Cardiac septum (tissue), 1 donor: ENCODE measurements at regions of chr2 and their contacts with region 1.

Region 1: GRCh38 chr2:200713003-200713703 is 98.6 kb upstream of the BZW1 start:
- DNase-seq: peak; percentile 93

Region 2: DNA sequence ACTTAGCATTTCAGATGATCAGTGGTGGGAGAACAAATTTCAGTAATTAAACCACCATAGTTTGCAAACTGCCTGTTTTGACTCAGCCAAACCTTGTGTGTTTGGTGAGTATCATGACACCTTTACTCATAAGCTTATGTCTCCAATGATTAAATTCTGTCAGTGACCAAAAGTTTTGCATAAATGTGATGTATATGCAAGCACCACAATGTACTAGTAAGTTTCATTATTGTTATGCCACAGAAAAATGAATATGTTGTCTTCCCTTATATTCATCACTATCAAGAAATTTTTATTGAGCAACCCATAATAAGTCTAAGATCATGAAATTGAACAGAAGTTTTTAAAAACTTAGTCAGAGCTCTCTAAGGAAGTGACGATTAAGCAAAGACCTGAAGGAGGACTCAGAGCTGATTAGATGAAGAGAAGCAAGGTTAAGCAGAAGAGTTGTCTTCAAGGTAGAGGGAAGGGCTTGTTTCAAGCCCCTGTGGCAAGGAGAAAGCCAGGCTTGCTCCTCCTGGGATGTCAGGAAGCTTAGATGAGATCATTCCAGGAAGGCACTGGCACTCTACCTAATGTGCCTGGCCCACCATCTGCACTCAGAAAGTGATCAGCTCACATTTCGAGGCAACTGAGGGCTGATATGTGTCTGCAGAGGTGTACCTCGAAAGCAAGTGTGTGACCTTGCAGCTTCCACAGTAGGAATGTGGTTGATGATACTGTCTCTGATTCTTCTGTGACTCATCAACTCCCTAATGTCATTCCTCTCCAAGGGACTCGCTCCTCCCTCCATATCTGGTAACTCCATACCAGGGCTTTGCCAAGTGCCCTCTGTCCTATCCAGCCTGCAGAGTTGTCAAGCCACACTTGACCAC is 258.0 kb before region 1 on chr2:
- intact Hi-C with region 1: no loop called
- DNase-seq: no peak

Region 3: DNA sequence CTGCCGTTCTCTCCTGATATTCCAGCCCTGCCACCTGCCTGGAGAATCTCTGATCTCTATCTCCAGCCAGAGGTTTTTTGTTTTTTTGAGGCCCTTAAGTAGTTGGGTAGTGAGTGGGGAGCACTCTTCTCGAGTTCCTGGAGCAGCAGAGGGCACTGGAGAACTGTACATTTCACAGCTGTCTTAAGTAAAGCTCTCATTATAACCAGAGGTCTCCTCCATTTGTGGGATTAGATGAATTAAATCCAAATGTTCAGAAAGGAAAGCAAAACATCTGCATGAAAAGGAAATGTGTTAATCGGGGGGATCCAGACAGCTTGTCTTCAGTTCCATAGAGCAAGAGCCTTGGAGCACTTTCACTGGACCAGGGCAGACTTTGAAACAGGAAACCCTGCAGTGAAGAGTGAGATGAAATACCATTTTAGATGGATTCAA is 94.5 kb before region 1 on chr2:
- intact Hi-C with region 1: no loop called
- DNase-seq: no peak

Region 4: GRCh38 chr2:200735061-200735460 is 21.9 kb after region 1 on chr2:
- intact Hi-C with region 1: loop called (anchors 1 kb)
- DNase-seq: no peak